CD4-positive, alpha-beta T cell (primary cell): ENCODE measurements at regions of chr2 and their contacts with region 1.

Region 1: DNA sequence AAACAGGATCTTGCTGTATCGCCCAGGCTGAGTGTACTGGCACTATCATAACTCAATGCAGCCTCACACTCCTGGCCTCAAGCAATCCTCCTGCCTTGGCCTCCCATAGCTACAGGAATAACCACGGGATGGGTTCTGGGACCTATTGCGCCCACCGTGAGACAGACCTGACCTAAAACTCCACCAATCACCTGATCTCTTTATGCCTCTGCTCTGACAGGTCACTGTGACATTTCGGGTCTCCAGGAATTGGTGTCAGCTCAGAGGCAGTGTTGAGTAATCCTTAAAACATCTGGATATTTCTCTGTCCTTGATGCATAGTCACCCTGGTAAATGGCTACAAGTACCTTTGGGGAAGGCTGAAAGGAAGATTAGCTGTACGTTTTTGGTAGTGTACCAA is 5.2 kb upstream of the MRPS5 start:
- DNase-seq: no peak
- ATAC-seq: no peak
- H3K4me3 ChIP-seq: no peak overlapping the region
- H3K4me3 Mint-ChIP-seq: no peak overlapping the region
- H3K27ac ChIP-seq: no peak overlapping the region
- H3K27ac Mint-ChIP-seq: no peak overlapping the region
- H3K4me1 ChIP-seq: peaks cover 7% of the 10 kb centered on the region
- H3K4me1 Mint-ChIP-seq: peaks cover 8% of the 10 kb centered on the region
- H3K27me3 ChIP-seq: no peaks in the 10 kb centered on the region
- H3K27me3 Mint-ChIP-seq: no peaks in the 10 kb centered on the region
- CTCF ChIP-seq: no peak

Region 2: DNA sequence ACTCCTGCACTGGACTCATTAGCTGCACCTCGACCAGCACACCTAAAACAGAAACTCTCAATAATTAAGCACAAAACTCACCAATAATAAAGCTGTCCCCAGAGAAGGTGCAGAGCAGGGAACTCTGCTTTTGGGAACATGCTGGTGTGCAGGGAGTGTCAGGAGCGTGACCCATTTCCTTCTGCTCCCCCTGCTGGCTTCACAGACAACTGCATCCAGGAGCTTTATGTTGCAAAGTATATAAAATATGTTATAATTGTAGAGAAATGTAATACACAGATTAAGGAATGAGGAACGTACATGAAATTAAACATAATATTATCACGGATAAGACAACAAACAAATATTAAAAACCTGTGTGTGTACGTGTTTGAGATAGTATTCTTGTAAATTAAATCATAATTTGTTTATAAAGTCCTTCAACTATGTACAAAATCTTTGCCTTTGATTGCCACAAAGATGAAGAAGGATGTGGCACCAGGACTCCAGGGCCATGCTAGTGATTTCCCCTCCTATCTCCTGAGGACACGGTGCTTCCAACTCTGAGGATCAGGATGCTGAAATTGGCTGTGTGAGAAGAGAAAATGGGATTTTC is 169.9 kb before region 1 on chr2:
- CTCF ChIA-PET with region 1: no interaction called
- POLR2A ChIA-PET with region 1: no interaction called
- intact Hi-C with region 1: no loop called
- DNase-seq: peak in 13 of 14 experiments; percentile 10 to 53 (median 20)
- ATAC-seq: no peak
- H3K4me3 ChIP-seq: no peak overlapping the region
- H3K4me3 Mint-ChIP-seq: no peak overlapping the region
- H3K27ac ChIP-seq: no peak overlapping the region
- H3K27ac Mint-ChIP-seq: no peak overlapping the region
- H3K4me1 ChIP-seq: no peaks in the 10 kb centered on the region
- H3K4me1 Mint-ChIP-seq: no peaks in the 10 kb centered on the region
- H3K27me3 ChIP-seq: peaks cover 10 to 13% of the 10 kb centered on the region in 2 experiments
- H3K27me3 Mint-ChIP-seq: peaks cover 66% of the 10 kb centered on the region
- CTCF ChIP-seq: peak; percentile 97

Region 3: DNA sequence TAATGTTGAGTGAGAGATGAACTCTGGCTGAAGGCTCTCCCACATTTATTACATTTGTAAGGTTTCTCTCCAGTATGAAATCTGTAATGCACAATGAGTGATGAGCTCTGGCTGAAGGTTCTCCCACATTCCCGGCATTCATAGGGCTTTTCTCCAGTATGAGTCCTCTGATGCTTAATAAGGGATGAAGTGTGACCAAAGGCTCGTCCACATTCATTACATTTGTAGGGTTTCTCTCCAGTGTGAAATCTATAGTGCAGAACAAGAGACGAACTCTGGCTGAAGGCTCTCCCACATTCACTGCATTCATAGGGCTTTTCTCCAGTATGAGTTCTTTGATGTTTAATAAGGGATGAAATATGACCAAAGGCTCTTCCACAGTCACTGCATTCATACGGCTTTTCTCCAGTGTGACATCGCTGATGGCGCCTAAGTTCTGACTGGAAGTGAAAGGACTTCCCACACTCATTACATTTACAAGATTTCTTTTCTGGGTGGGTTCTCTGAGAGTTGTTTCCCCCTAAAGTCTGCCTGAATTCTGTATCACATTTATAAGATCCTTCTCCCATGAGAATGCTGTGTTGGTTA is 22.7 kb after region 1 on chr2:
- CTCF ChIA-PET with region 1: no interaction called
- POLR2A ChIA-PET with region 1: interaction called, 4 read pairs
- intact Hi-C with region 1: loop called in 1 of 2 experiments (anchors 2 kb)
- DNase-seq: no peak
- ATAC-seq: no peak
- H3K4me3 ChIP-seq: no peak overlapping the region
- H3K4me3 Mint-ChIP-seq: no peak overlapping the region
- H3K27ac ChIP-seq: no peak overlapping the region
- H3K27ac Mint-ChIP-seq: no peak overlapping the region
- H3K4me1 ChIP-seq: no peaks in the 10 kb centered on the region
- H3K4me1 Mint-ChIP-seq: no peaks in the 10 kb centered on the region
- H3K27me3 ChIP-seq: no peaks in the 10 kb centered on the region
- H3K27me3 Mint-ChIP-seq: no peaks in the 10 kb centered on the region
- CTCF ChIP-seq: no peak

Region 4: GRCh38 chr2:95225658-95226057 is 98.9 kb after region 1 on chr2:
- CTCF ChIA-PET with region 1: no interaction called
- POLR2A ChIA-PET with region 1: no interaction called
- intact Hi-C with region 1: no loop called
- DNase-seq: no peak
- ATAC-seq: no peak
- H3K4me3 ChIP-seq: no peak overlapping the region
- H3K4me3 Mint-ChIP-seq: no peak overlapping the region
- H3K27ac ChIP-seq: no peak overlapping the region
- H3K27ac Mint-ChIP-seq: no peak overlapping the region
- H3K4me1 ChIP-seq: no peaks in the 10 kb centered on the region
- H3K4me1 Mint-ChIP-seq: no peaks in the 10 kb centered on the region
- H3K27me3 ChIP-seq: no peaks in the 10 kb centered on the region
- H3K27me3 Mint-ChIP-seq: no peaks in the 10 kb centered on the region
- CTCF ChIP-seq: no peak